Activated naive CD4-positive, alpha-beta T cell treated with anti-CD3 and anti-CD28 coated beads for 36 hours (primary cell): ENCODE measurements at regions of chr6 and their contacts with region 1.

Region 1: GRCh38 chr6:7137335-7138045 is 29.7 kb downstream of the RREB1 start:
- DNase-seq: peak; percentile 84
- H3K4me3 Mint-ChIP-seq: peak overlapping the region; percentile 79
- H3K27ac Mint-ChIP-seq: peak overlapping the region; percentile 98
- H3K4me1 Mint-ChIP-seq: peaks cover 80% of the 10 kb centered on the region
- H3K27me3 Mint-ChIP-seq: no peaks in the 10 kb centered on the region

Region 2: GRCh38 chr6:6538261-6538660 is 599.2 kb before region 1 on chr6:
- CTCF ChIA-PET with region 1: no interaction called
- intact Hi-C with region 1: no loop called
- DNase-seq: no peak
- H3K4me3 Mint-ChIP-seq: no peak overlapping the region
- H3K27ac Mint-ChIP-seq: no peak overlapping the region
- H3K4me1 Mint-ChIP-seq: peaks cover 6% of the 10 kb centered on the region
- H3K27me3 Mint-ChIP-seq: peaks cover 10% of the 10 kb centered on the region

Region 3: DNA sequence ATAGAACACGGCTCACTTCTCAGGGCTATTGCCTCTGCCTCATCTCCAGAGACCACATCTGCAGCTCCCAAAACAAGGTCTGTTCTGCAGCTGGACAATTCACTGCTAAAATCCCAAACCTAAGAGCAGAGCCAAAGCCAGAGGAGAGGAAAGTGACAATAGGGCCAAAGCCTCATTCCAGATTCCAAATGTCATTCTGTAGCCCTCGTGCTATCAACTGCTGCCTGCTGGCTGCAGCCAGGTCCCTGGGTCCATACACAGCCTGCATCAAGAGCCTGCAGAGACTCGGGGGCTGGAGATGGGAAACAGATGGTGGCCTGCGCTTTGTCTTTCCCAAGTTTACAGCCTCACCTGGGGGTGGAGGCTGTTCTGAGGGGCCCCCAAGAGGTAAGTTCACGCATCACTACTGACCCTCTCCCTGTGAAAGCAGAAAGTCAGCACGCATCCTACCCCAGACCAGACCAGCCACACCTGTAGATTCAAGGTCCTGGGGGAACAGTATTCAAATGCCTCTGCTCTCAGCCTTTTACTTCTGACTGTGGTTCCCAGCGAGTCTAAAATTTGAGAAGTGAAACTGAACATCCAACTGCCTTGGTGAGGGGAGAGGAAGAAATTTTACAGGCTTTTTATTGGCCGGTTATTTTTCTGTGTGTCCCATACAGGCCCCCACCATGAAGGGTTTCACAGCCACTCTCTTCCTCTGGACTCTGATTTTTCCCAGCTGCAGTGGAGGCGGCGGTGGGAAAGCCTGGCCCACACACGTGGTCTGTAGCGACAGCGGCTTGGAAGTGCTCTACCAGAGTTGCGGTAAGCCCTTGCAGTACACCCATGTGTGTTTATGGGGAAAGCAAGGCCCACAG is 549.2 kb before region 1 on chr6 and contains the start of gene LY86:
- CTCF ChIA-PET with region 1: no interaction called
- intact Hi-C with region 1: loop called (anchors 10 kb)
- DNase-seq: peak; percentile 46
- H3K4me3 Mint-ChIP-seq: peak within 1 kb of the TSS; percentile 75
- H3K27ac Mint-ChIP-seq: peak within 1 kb of the TSS; percentile 87
- H3K4me1 Mint-ChIP-seq: peaks cover 75% of the 10 kb centered on the region
- H3K27me3 Mint-ChIP-seq: no peaks in the 10 kb centered on the region
- total RNA-seq, gene LY86: 1.8 to 2.0 TPM

Region 4: GRCh38 chr6:6661684-6662083 is 475.8 kb before region 1 on chr6:
- CTCF ChIA-PET with region 1: no interaction called
- intact Hi-C with region 1: loop called (anchors 5 kb)
- DNase-seq: no peak
- H3K4me3 Mint-ChIP-seq: no peak overlapping the region
- H3K27ac Mint-ChIP-seq: no peak overlapping the region
- H3K4me1 Mint-ChIP-seq: peaks cover 42% of the 10 kb centered on the region
- H3K27me3 Mint-ChIP-seq: no peaks in the 10 kb centered on the region

Region 5: GRCh38 chr6:7073821-7074525 is 63.5 kb before region 1 on chr6:
- CTCF ChIA-PET with region 1: no interaction called
- intact Hi-C with region 1: loop called (anchors 5 kb)
- DNase-seq: peak; percentile 84
- H3K4me3 Mint-ChIP-seq: no peak overlapping the region
- H3K27ac Mint-ChIP-seq: peak overlapping the region; percentile 9
- H3K4me1 Mint-ChIP-seq: peaks cover 12% of the 10 kb centered on the region
- H3K27me3 Mint-ChIP-seq: peaks cover 9% of the 10 kb centered on the region

Region 6: DNA sequence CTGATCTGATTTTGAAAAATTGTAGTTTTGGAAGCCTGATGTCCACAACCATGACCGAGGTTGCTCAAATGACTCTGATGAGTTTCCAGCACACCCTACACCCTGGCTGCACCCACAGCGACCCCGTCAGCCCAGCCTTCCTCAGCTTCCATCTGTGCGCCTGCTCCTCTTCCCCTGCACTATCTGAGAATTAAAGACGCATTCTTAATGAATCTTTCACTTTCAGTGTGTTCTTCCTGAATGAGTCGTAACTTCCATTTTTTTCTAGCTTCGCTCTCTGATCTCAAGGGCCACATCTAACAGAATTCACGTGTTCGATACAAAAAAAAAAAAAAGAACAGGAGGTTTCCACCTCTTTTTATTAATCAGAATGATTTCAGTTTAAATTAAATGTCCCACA is 51.0 kb before region 1 on chr6:
- CTCF ChIA-PET with region 1: interaction called, 3 read pairs
- intact Hi-C with region 1: loop called (anchors 2 kb)
- DNase-seq: peak; percentile 65
- H3K4me3 Mint-ChIP-seq: peak overlapping the region; percentile 17
- H3K27ac Mint-ChIP-seq: no peak overlapping the region
- H3K4me1 Mint-ChIP-seq: peaks cover 29% of the 10 kb centered on the region
- H3K27me3 Mint-ChIP-seq: no peaks in the 10 kb centered on the region

Region 7: DNA sequence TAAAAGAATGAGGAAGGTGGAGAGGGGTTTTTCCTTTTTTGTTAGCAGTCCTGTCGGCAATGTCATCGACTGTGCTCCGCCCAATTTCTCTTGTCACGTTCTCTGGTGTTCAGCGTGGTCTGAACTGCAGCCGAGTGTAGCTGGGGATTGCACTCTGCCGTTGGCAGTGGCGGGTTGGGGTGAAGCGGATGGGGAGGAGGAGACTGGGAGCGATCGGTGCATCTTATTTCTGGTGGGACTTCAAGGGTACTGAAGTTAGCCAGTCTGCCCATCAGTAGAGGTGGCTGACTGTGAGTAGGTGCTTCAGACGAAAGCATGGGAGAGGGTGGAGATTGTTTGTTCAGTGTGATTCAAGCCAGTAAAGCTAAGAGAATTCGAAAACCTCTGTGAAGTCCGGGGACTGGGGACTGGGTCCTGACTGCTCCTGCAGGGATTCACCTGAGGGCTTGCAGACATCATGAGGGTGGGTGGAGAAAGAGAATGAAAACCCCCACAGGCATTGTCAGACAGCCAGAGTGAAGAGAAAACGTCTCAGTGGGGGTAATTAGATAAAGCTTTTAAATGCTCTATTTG is 24.7 kb before region 1 on chr6:
- CTCF ChIA-PET with region 1: interaction called, 9 read pairs
- intact Hi-C with region 1: loop called (anchors 1 kb)
- DNase-seq: peak; percentile 72
- H3K4me3 Mint-ChIP-seq: peak overlapping the region; percentile 73
- H3K27ac Mint-ChIP-seq: peak overlapping the region; percentile 51
- H3K4me1 Mint-ChIP-seq: peaks cover 74% of the 10 kb centered on the region
- H3K27me3 Mint-ChIP-seq: no peaks in the 10 kb centered on the region

Region 8: GRCh38 chr6:7154341-7155139 is 17.1 kb after region 1 on chr6:
- CTCF ChIA-PET with region 1: interaction called, 6 read pairs
- intact Hi-C with region 1: loop called (anchors 1 kb)
- DNase-seq: peak; percentile 36
- H3K4me3 Mint-ChIP-seq: peak overlapping the region; percentile 19
- H3K27ac Mint-ChIP-seq: peak overlapping the region; percentile 65
- H3K4me1 Mint-ChIP-seq: peaks cover 85% of the 10 kb centered on the region
- H3K27me3 Mint-ChIP-seq: no peaks in the 10 kb centered on the region